IMR-90 (cell line): ENCODE measurements at regions of chr22 and their contacts with region 1.

Region 1: GRCh38 chr22:29603358-29604075 is at the start of gene NF2:
- DNase-seq: peak; percentile 99
- ATAC-seq: peak; percentile 99
- H3K4me3 ChIP-seq: peak within 1 kb of the TSS; percentile 100
- H3K27ac ChIP-seq: peak within 1 kb of the TSS; percentile 93
- H3K4me1 ChIP-seq: peaks cover 10% of the 10 kb centered on the region; the same call in 1 of the 2 replicates
- H3K27me3 ChIP-seq: no peaks in the 10 kb centered on the region
- CTCF ChIP-seq: no peak
- POLR2A ChIP-seq: no peak; the same call in 1 of the 2 replicates
- RAD21 ChIP-seq: no peak
- total RNA-seq, gene NF2: 151 and 181 TPM in 2 replicates

Region 2: DNA sequence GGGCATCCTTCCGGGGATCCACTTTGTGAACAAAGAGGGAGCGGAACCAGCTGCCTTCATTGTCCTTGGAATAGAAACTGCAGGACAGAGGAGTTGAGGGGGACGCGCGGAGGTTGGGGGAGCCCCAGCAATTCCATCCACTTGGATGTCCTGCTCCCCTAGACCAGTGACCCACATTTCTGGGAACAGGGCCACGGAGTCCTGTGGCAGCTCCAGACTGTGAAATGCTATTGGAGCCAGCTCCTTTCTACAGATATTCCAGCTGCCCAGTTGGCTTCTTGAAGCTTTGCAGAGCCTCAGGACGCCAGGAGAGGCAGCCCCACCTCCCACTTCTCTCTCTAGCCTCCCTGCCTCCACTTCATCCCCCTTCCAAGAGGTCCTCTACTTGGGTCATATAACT is 33.1 kb before region 1 on chr22:
- CTCF ChIA-PET with region 1: no interaction called
- POLR2A ChIA-PET with region 1: no interaction called
- dilution Hi-C with region 1: no loop called
- in situ Hi-C with region 1: no loop called
- intact Hi-C with region 1: no loop called
- DNase-seq: no peak
- ATAC-seq: no peak
- H3K4me3 ChIP-seq: no peak overlapping the region
- H3K27ac ChIP-seq: no peak overlapping the region
- H3K4me1 ChIP-seq: no peaks in the 10 kb centered on the region
- H3K27me3 ChIP-seq: no peaks in the 10 kb centered on the region
- CTCF ChIP-seq: no peak
- POLR2A ChIP-seq: no peak
- RAD21 ChIP-seq: no peak

Region 3: DNA sequence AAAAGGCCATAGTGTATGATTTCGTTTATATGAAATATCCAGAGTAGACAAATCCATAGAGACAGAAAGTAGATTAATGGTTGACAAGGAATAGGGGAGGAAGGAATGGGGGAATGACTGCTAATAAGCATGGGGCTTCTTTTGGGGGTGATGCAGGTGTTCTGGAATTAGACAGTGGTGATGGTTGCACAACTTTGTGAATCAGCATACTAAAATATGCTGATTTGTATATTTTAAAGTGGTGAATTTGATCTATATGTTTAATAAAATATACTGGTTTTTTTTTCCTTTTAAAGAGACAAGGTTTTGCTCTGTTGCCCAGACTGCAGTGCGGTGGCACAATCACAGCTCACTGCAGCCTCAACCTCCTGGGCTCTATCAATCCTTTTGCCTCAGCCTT is 470.2 kb after region 1 on chr22:
- CTCF ChIA-PET with region 1: no interaction called
- POLR2A ChIA-PET with region 1: interaction called, 11 read pairs
- dilution Hi-C with region 1: no loop called
- in situ Hi-C with region 1: no loop called
- intact Hi-C with region 1: no loop called
- DNase-seq: peak; percentile 46
- ATAC-seq: no peak
- H3K4me3 ChIP-seq: no peak overlapping the region
- H3K27ac ChIP-seq: no peak overlapping the region
- H3K4me1 ChIP-seq: peaks cover 2% of the 10 kb centered on the region; the same call in 1 of the 2 replicates
- H3K27me3 ChIP-seq: peaks cover 23% of the 10 kb centered on the region
- CTCF ChIP-seq: no peak
- POLR2A ChIP-seq: no peak
- RAD21 ChIP-seq: no peak